ENCODE measurements at regions of chr15 and their contacts with region 1.

Region 1: GRCh38 chr15:78195735-78196201 is 38.6 kb downstream of the ACSBG1 start:
- DNase-seq: peak; percentile 85
- CTCF ChIP-seq: peak; percentile 93

Region 2: GRCh38 chr15:77959432-77959879 is 236.3 kb before region 1 on chr15:
- CTCF ChIA-PET with region 1: interaction called, 26 read pairs
- POLR2A ChIA-PET with region 1: no interaction called
- DNase-seq: peak; percentile 85
- CTCF ChIP-seq: peak; percentile 96

Region 3: GRCh38 chr15:78120523-78120922 is 75.2 kb before region 1 on chr15:
- CTCF ChIA-PET with region 1: interaction called, 193 read pairs
- POLR2A ChIA-PET with region 1: no interaction called
- DNase-seq: no peak
- CTCF ChIP-seq: no peak

Region 4: GRCh38 chr15:78140292-78140691 is 55.5 kb before region 1 on chr15:
- CTCF ChIA-PET with region 1: interaction called, 19 read pairs
- POLR2A ChIA-PET with region 1: no interaction called
- DNase-seq: no peak
- CTCF ChIP-seq: no peak

Region 5: GRCh38 chr15:78170848-78171773 is 24.7 kb before region 1 on chr15:
- CTCF ChIA-PET with region 1: interaction called, 82 read pairs
- POLR2A ChIA-PET with region 1: no interaction called
- DNase-seq: peak; percentile 64
- CTCF ChIP-seq: no peak

Region 6: GRCh38 chr15:78182821-78183220 is 12.9 kb before region 1 on chr15:
- CTCF ChIA-PET with region 1: interaction called, 82 read pairs
- POLR2A ChIA-PET with region 1: no interaction called
- DNase-seq: no peak
- CTCF ChIP-seq: no peak

Region 7: GRCh38 chr15:78241007-78241406 is 45.2 kb after region 1 on chr15:
- CTCF ChIA-PET with region 1: interaction called, 31 read pairs
- POLR2A ChIA-PET with region 1: no interaction called
- DNase-seq: peak; percentile 90
- CTCF ChIP-seq: peak; percentile 81